ENCODE measurements at regions of chr3 and their contacts with region 1.

Region 1: GRCh38 chr3:27484015-27484844 is at the start of gene SLC4A7:
- DNase-seq: peak; percentile 87 to 97
- ATAC-seq: peak; percentile 95 to 97
- H3K4me3 ChIP-seq: peak within 1 kb of the TSS; percentile 93
- H3K27ac ChIP-seq: peak within 1 kb of the TSS; percentile 93 to 99
- H3K4me1 ChIP-seq: peaks cover 33% of the 10 kb centered on the region
- CTCF ChIP-seq: no peak
- EP300 ChIP-seq: no peak
- POLR2A ChIP-seq: peak; percentile 98
- RAD21 ChIP-seq: no peak; a peak in 1 of 5 replicates
- polyA plus RNA-seq, gene SLC4A7: 49.1 and 70.2 TPM in 2 replicates

Region 2: DNA sequence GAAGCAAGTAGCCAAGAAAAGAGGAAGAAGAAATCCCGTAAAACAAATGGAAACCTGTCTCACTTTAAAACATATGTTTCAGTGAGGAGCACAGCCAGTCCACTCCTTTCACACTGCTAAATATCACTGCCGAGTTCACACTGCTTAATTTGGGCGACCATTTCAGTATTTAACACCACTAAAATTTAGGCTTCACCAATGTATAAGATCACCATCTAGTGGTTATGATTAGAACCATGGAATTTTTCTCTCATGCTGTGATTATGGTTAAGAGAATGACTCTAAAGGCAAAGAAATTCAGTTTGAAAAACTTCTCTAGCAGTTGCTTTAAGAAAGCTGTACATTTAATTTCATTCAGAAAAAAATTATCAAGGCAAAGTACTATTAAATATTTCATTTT is 16.7 kb before region 1 on chr3:
- CTCF ChIA-PET with region 1: interaction called, 11 read pairs
- POLR2A ChIA-PET with region 1: interaction called, 7 read pairs
- DNase-seq: peak; percentile 57 to 60
- ATAC-seq: peak; percentile 82
- H3K4me3 ChIP-seq: no peak overlapping the region
- H3K27ac ChIP-seq: peak overlapping the region in 1 of 2 experiments; percentile 64; a peak in 2 of 6 replicates
- H3K4me1 ChIP-seq: peaks cover 18% of the 10 kb centered on the region; the same call in 2 of the 3 replicates
- CTCF ChIP-seq: peak; percentile 74
- EP300 ChIP-seq: no peak
- POLR2A ChIP-seq: no peak
- RAD21 ChIP-seq: peak; percentile 75 to 79

Region 3: DNA sequence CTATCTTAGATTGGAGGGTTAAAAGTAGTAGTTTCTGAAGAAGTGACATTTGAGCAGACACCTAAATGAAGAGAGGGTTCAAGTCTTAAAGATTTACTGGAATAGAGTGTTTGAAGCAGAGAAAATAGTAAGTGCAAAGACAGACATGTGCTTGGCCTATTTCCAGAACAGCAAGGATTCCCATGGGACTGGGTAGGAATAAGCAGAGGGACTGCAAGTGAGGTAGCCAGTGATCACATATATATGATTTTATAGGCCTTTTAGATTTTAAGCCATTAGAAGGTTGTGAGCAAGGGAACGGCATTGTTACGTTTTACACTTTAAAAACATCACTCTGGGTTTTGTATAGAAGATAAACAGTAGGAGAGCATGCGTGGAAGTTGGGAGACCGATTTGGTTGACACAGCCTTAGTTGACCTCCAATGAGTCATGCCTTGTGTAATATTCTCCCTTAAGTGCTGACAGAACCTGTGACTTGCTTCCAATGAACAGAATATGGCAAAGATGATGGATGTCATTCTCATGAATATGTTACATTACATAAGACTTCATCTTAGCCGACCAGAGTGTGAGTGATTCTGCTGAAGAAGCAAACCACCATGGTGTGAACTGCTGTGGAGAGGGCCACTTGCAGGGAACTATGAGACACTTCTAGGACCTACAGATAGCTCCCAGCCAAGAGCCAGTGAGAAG is 37.1 kb after region 1 on chr3:
- CTCF ChIA-PET with region 1: interaction called, 7 read pairs
- POLR2A ChIA-PET with region 1: interaction called, 17 read pairs
- DNase-seq: peak; percentile 77 to 93
- ATAC-seq: peak; percentile 89 to 95
- H3K4me3 ChIP-seq: no peak overlapping the region
- H3K27ac ChIP-seq: peak overlapping the region; percentile 58 to 90
- H3K4me1 ChIP-seq: peaks cover 59% of the 10 kb centered on the region
- CTCF ChIP-seq: no peak
- EP300 ChIP-seq: peak; percentile 60 to 76; a peak in 3 of 5 replicates
- POLR2A ChIP-seq: no peak
- RAD21 ChIP-seq: no peak

Region 4: GRCh38 chr3:27533718-27534573 is 49.7 kb after region 1 on chr3:
- CTCF ChIA-PET with region 1: interaction called, 7 read pairs
- POLR2A ChIA-PET with region 1: interaction called, 20 read pairs
- DNase-seq: peak; percentile 95 to 98
- ATAC-seq: peak; percentile 95 to 96
- H3K4me3 ChIP-seq: peak overlapping the region; percentile 21; the same call in 1 of the 3 replicates
- H3K27ac ChIP-seq: peak overlapping the region; percentile 93 to 95
- H3K4me1 ChIP-seq: peaks cover 42% of the 10 kb centered on the region
- CTCF ChIP-seq: no peak
- EP300 ChIP-seq: peak; percentile 88 to 97; a peak in 4 of 5 replicates
- POLR2A ChIP-seq: no peak
- RAD21 ChIP-seq: peak; percentile 66 to 68

Region 5: GRCh38 chr3:27632431-27633223 is 148.4 kb after region 1 on chr3:
- CTCF ChIA-PET with region 1: interaction called, 5 read pairs
- POLR2A ChIA-PET with region 1: interaction called, 18 read pairs
- DNase-seq: peak; percentile 52 to 80
- ATAC-seq: peak; percentile 91 to 94
- H3K4me3 ChIP-seq: peak overlapping the region; percentile 53
- H3K27ac ChIP-seq: peak overlapping the region; percentile 93 to 97
- H3K4me1 ChIP-seq: peaks cover 41% of the 10 kb centered on the region
- CTCF ChIP-seq: no peak
- EP300 ChIP-seq: no peak
- POLR2A ChIP-seq: peak; percentile 43
- RAD21 ChIP-seq: no peak

Measured in A549 (cell line).